ENCODE measurements at regions of chr9 and their contacts with region 1.

Region 1: GRCh38 chr9:131262327-131263032 is 13.8 kb downstream of the FAM78A start:
- DNase-seq: no peak
- H3K4me3 ChIP-seq: no peak overlapping the region
- CTCF ChIP-seq: no peak
- POLR2A ChIP-seq: no peak

Region 2: DNA sequence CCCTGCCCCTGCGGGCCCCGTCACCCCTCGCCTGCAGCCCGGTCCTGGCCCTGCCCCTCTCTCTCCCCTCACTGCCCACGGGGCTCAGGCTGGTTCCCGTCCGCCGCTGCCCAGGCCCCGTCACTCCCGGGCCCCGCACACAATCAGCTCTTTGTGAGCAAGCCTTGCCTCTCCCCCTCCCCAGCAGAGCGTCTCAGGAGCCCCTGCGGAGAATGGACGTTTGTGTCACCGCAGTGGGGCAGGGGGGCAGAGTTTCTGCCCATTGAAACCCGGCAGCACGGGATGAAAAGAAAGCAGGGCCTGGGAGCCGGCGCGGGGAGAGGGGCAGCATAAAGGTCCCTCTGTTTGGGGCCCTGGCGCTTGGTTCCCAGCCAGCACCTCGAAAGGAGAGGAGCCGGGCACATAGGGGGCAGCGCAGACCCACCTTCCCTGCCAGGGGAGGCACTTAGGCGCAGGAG is 150.6 kb before region 1 on chr9:
- intact Hi-C with region 1: no loop called
- DNase-seq: no peak
- H3K4me3 ChIP-seq: no peak overlapping the region
- CTCF ChIP-seq: no peak
- POLR2A ChIP-seq: no peak

Region 3: GRCh38 chr9:132694157-132694556 is 1431.7 kb after region 1 on chr9:
- intact Hi-C with region 1: loop called (anchors 5 kb)
- DNase-seq: no peak
- H3K4me3 ChIP-seq: no peak overlapping the region
- CTCF ChIP-seq: no peak
- POLR2A ChIP-seq: no peak

Measured in lower leg skin (tissue), 4 donors.